ENCODE measurements at regions of chr9 and their contacts with region 1.

Region 1: DNA sequence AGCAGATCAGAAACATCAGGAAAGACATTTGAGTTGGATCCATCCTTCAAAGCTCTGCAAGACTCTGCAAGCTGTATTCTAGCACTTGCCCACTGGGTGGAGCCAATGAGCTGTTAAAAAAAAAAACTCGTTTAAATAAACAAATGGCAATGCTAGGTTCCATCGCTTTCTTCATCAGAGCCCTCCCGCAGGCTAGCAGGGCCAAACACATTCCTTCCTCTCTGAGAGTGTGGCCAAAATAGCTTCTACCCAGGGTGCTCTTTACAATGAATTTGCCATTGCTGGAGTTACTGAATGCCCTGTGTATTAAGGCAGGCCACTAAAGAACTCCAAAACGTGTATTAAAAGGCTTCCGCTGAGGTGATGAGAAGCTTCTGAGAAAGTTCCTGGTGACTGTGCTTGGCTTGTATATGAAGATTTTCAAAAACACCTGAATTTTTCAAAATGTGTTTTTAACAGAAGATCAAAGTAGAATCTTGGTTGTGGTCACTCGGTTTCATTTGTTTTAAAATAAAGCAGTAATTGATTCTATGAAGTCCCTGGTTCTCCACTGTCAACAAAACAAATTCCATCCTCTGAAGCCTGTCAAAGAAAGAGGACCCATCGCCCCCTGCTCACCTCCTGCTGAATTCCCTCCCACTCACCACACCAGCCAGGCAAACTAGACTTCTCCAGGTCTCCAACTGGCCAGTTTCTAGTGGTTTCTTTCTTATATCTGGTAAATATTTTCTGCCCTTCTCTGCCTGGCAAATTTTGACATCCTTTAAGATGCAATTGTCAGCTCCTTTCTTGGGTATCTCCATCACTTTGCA is 36.5 kb upstream of the EQTN start:
- DNase-seq: peak; percentile 84
- ATAC-seq: peak; percentile 96
- H3K4me3 ChIP-seq: no peak overlapping the region
- H3K4me3 Mint-ChIP-seq: no peak overlapping the region
- H3K27ac ChIP-seq: no peak overlapping the region
- H3K27ac Mint-ChIP-seq: no peak overlapping the region
- H3K4me1 ChIP-seq: peaks cover 6 to 12% of the 10 kb centered on the region in 2 donors
- H3K4me1 Mint-ChIP-seq: peaks cover 10% of the 10 kb centered on the region
- H3K27me3 ChIP-seq: no peaks in the 10 kb centered on the region
- H3K27me3 Mint-ChIP-seq: no peaks in the 10 kb centered on the region
- CTCF ChIP-seq: peak; percentile 91

Region 2: DNA sequence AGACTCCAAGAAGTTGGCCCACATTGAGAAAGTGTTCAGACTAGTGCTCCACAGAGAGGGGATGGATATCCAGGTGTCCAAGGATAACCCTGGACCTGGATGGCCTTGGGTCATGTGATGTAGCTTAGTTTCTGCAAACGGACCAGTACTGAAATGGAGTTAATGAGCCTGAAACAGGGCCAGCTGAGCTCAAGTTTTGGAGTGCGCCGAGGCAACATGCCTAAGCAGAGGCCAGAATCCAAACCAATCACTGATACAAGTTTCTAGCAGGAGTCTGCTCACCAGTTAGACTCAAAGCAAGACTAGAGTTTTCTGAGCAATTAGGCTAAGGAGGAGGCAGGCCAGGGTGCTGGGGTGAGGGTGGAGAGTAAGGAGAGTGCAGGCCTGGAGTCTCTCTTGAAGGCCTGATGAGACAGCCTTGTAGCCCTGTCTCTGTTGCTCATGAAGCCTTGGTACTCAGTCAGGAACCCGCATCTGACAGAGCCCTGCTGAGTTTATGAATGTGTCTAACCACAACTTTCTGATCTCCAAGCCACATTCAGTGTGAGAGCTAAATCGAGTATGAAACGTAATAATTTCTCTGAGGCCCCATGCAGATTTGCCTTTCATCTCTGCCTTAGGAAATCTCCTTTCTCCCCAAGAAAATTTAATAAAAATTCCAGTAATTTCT is 32.4 kb after region 1 on chr9:
- CTCF ChIA-PET with region 1: interaction called, 20 read pairs
- POLR2A ChIA-PET with region 1: no interaction called
- intact Hi-C with region 1: loop called (anchors 5 kb)
- DNase-seq: no peak
- ATAC-seq: peak; percentile 28
- H3K4me3 ChIP-seq: peak overlapping the region in 1 of 5 experiments; percentile 1
- H3K4me3 Mint-ChIP-seq: peak overlapping the region; percentile 81
- H3K27ac ChIP-seq: no peak overlapping the region
- H3K27ac Mint-ChIP-seq: peak overlapping the region; percentile 28
- H3K4me1 ChIP-seq: peaks cover 56 to 60% of the 10 kb centered on the region in 2 donors
- H3K4me1 Mint-ChIP-seq: peaks cover 56% of the 10 kb centered on the region
- H3K27me3 ChIP-seq: no peaks in the 10 kb centered on the region
- H3K27me3 Mint-ChIP-seq: no peaks in the 10 kb centered on the region
- CTCF ChIP-seq: no peak

Region 3: GRCh38 chr9:27441741-27442070 is 108.3 kb after region 1 on chr9:
- CTCF ChIA-PET with region 1: interaction called, 6 read pairs
- POLR2A ChIA-PET with region 1: no interaction called
- intact Hi-C with region 1: loop called (anchors 5 kb)
- DNase-seq: peak; percentile 51
- ATAC-seq: peak; percentile 95
- H3K4me3 ChIP-seq: peak overlapping the region in 1 of 5 experiments; percentile 21
- H3K4me3 Mint-ChIP-seq: peak overlapping the region; percentile 70
- H3K27ac ChIP-seq: peak overlapping the region; percentile 15 to 42
- H3K27ac Mint-ChIP-seq: peak overlapping the region; percentile 87
- H3K4me1 ChIP-seq: peaks cover 50 to 53% of the 10 kb centered on the region in 2 donors
- H3K4me1 Mint-ChIP-seq: peaks cover 70% of the 10 kb centered on the region
- H3K27me3 ChIP-seq: no peaks in the 10 kb centered on the region
- H3K27me3 Mint-ChIP-seq: no peaks in the 10 kb centered on the region
- CTCF ChIP-seq: no peak

Region 4: DNA sequence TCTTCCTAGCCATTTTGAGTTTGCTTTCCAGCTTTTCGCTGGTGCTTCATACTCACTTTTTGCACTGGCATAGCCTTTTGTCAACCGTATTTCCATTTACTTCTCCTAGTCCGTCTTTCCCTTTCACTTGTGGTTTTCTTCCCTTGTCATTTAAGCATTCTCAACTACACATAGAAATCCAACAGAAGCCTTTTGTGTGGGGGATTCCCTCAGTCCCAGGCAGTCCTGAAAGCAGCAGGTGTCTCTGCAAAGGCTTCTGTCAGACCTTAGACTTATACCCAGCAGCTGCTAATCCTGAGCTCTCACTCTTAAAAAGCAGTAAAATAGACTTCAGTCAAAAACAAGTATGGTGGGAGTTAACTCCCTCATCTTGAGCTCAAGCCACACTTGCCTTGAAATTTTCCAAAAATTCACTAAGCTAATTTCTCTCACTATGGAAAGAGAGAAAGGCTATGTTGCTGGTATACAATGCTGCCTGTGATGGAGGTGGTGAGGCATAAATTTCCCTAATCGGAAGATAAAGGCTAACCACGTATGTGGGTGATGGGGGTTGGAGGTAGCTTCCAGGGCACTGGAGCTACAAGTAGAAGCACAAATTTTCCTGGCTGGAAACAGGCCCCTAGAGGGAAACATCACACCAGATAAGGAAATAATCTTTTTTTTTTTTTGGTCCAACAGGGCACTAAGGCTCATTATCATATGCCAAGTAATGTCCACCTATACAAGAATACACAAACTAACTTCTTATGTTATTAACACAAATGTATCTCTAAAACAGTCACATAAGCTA is 155.8 kb after region 1 on chr9:
- CTCF ChIA-PET with region 1: interaction called, 14 read pairs
- POLR2A ChIA-PET with region 1: no interaction called
- intact Hi-C with region 1: no loop called
- DNase-seq: peak; percentile 36
- ATAC-seq: no peak
- H3K4me3 ChIP-seq: no peak overlapping the region
- H3K4me3 Mint-ChIP-seq: peak overlapping the region; percentile 63
- H3K27ac ChIP-seq: peak overlapping the region; percentile 28 to 60
- H3K27ac Mint-ChIP-seq: peak overlapping the region; percentile 72
- H3K4me1 ChIP-seq: peaks cover 74 to 83% of the 10 kb centered on the region in 2 donors
- H3K4me1 Mint-ChIP-seq: peaks cover 76% of the 10 kb centered on the region
- H3K27me3 ChIP-seq: no peaks in the 10 kb centered on the region
- H3K27me3 Mint-ChIP-seq: no peaks in the 10 kb centered on the region
- CTCF ChIP-seq: no peak

Region 5: GRCh38 chr9:27556470-27556869 is 223.0 kb after region 1 on chr9:
- CTCF ChIA-PET with region 1: interaction called, 17 read pairs
- POLR2A ChIA-PET with region 1: no interaction called
- intact Hi-C with region 1: no loop called
- DNase-seq: no peak
- ATAC-seq: no peak
- H3K4me3 ChIP-seq: no peak overlapping the region
- H3K4me3 Mint-ChIP-seq: no peak overlapping the region
- H3K27ac ChIP-seq: no peak overlapping the region
- H3K27ac Mint-ChIP-seq: no peak overlapping the region
- H3K4me1 ChIP-seq: peaks cover 0 to 2% of the 10 kb centered on the region in 2 donors
- H3K4me1 Mint-ChIP-seq: peaks cover under 1% of the 10 kb centered on the region
- H3K27me3 ChIP-seq: no peaks in the 10 kb centered on the region
- H3K27me3 Mint-ChIP-seq: no peaks in the 10 kb centered on the region
- CTCF ChIP-seq: no peak